ENCODE measurements at regions of chr1 and their contacts with region 1.

Region 1: DNA sequence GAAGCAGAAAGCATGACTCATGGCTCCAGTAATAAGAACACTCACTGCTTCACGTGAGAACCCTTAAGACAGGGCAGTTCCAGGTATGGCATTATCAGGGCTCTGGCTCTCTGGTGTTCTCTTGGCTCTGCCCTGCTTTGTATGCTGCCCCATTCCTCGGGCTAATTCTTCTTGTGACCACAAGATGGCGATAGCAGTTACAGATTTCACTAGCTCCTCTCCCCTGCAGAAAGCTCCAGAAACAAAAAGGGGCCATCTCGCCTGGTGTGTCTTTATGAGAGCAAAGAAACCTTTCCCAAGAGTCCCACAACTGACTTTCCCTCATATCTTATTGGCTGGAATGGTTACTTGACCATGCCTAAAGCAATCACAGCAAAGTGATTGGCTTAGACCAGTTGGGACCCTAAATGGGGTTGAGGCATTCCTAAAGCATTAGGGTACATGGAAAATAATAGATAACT is 60.1 kb downstream of the F3 start:
- DNase-seq: peak; percentile 78
- H3K4me3 Mint-ChIP-seq: no peak overlapping the region
- H3K27ac Mint-ChIP-seq: no peak overlapping the region
- H3K4me1 Mint-ChIP-seq: no peaks in the 10 kb centered on the region
- H3K27me3 Mint-ChIP-seq: no peaks in the 10 kb centered on the region
- CTCF ChIP-seq: peak; percentile 71

Region 2: GRCh38 chr1:94471271-94471670 is 10.2 kb before region 1 on chr1:
- CTCF ChIA-PET with region 1: interaction called, 13 read pairs
- POLR2A ChIA-PET with region 1: interaction called, 4 read pairs
- intact Hi-C with region 1: no loop called
- DNase-seq: no peak
- H3K4me3 Mint-ChIP-seq: no peak overlapping the region
- H3K27ac Mint-ChIP-seq: no peak overlapping the region
- H3K4me1 Mint-ChIP-seq: no peaks in the 10 kb centered on the region
- H3K27me3 Mint-ChIP-seq: no peaks in the 10 kb centered on the region
- CTCF ChIP-seq: no peak

Region 3: GRCh38 chr1:94504601-94505000 is 23.1 kb after region 1 on chr1:
- CTCF ChIA-PET with region 1: interaction called, 24 read pairs
- POLR2A ChIA-PET with region 1: interaction called, 3 read pairs
- intact Hi-C with region 1: no loop called
- DNase-seq: no peak
- H3K4me3 Mint-ChIP-seq: no peak overlapping the region
- H3K27ac Mint-ChIP-seq: no peak overlapping the region
- H3K4me1 Mint-ChIP-seq: peaks cover 6% of the 10 kb centered on the region
- H3K27me3 Mint-ChIP-seq: no peaks in the 10 kb centered on the region
- CTCF ChIP-seq: no peak

Region 4: DNA sequence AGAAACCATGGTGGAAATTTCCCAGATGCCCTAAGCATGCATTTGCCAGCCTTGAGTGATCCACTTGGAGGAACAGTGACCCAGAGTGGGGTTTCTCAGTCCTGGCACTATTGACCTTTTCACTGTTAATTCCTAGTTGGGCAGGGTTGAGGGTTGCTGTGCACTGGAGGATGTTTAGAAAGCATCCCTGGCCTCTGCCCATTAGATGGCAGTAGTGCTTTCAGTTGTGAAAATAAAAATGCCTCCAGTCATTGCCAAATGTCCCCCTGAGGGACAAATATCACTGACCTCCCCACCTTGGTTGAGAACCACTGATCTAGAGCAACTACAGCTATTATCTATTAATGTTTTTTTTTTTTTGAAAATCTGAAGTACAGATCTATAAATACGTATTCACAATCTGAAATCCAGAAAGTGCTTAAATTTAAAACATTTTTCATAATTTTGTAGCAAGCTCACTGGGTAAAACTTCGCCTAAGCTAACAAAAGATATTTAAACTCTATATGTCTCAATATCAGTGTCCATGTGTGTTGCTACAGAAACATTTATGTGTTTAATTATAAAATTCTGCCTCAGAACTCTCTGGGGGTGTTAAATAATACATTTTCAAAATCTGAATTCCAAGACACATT is 32.7 kb after region 1 on chr1:
- CTCF ChIA-PET with region 1: interaction called, 13 read pairs
- POLR2A ChIA-PET with region 1: no interaction called
- intact Hi-C with region 1: no loop called
- DNase-seq: peak; percentile 53
- H3K4me3 Mint-ChIP-seq: no peak overlapping the region
- H3K27ac Mint-ChIP-seq: no peak overlapping the region
- H3K4me1 Mint-ChIP-seq: no peaks in the 10 kb centered on the region
- H3K27me3 Mint-ChIP-seq: no peaks in the 10 kb centered on the region
- CTCF ChIP-seq: peak; percentile 63

Region 5: DNA sequence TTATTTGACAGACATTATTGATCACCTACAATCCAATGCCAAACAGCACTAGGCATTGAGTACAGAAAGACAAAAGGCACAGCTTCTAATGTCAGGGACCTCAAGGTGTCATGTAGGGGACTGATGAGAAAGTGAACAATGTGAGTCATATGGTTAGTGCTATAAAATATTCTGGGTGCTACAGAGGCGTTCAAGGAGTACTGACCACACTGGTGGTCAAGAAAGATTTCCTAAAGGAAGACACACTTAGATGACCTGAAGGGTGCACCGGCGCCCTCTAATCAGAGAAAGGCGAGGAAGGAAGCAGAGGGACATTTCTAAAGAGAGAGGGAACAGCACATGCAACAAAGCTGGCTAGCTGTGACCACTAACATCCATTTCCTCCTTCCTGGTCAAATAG is 125.0 kb after region 1 on chr1:
- CTCF ChIA-PET with region 1: no interaction called
- POLR2A ChIA-PET with region 1: no interaction called
- intact Hi-C with region 1: no loop called
- DNase-seq: no peak
- H3K4me3 Mint-ChIP-seq: no peak overlapping the region
- H3K27ac Mint-ChIP-seq: peak overlapping the region; percentile 82
- H3K4me1 Mint-ChIP-seq: peaks cover 27% of the 10 kb centered on the region
- H3K27me3 Mint-ChIP-seq: no peaks in the 10 kb centered on the region
- CTCF ChIP-seq: no peak

Region 6: DNA sequence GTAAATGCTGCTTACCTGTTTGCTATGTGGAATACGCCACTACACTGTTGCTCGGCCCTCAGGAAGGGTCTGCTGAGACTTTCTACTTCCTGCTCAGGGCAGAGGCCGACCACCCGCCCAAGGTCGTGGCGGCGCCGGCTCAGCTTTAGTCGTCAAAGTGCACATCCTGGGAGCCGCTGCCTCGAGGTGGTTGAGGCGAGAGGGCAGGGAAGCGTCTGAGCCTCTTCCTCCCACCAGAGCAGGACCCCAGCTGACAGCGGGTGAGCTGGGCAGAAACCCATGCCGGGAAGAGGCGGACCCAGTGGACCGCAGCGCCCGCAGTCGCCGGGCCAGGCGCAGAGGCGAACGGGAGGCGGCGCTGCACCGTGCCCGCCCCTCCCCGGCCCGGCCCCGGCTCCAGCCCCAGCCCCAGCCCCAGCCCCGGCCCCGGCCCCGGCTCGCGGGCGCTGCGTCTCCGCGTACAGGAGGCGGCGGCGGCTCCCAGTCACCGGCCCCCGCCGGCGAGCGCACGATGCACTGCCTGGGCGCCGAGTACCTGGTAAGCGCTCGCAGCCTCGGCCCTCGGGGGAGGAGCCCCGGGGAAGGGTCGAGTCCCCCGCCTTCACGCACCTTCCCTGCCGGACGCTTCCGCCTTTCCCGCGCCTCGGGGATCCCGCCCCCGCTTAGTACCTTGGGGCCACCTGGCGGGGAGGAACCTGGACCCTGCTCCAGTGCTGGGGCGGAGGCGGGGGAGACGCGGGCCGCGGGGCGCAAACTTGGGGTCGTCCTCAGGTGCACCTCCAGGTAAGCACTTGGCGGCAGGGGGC is 338.6 kb after region 1 on chr1 and contains the start of gene SLC44A3:
- CTCF ChIA-PET with region 1: no interaction called
- POLR2A ChIA-PET with region 1: no interaction called
- intact Hi-C with region 1: no loop called
- DNase-seq: peak; percentile 51
- H3K4me3 Mint-ChIP-seq: peak within 1 kb of the TSS; percentile 69
- H3K27ac Mint-ChIP-seq: no peak within 1 kb of the TSS
- H3K4me1 Mint-ChIP-seq: peaks cover 6% of the 10 kb centered on the region
- H3K27me3 Mint-ChIP-seq: no peaks in the 10 kb centered on the region
- CTCF ChIP-seq: peak; percentile 30
- total RNA-seq, gene SLC44A3: 0.83 and 2.8 TPM in 2 replicates